ENCODE measurements at regions of chr19 and their contacts with region 1.

Region 1: DNA sequence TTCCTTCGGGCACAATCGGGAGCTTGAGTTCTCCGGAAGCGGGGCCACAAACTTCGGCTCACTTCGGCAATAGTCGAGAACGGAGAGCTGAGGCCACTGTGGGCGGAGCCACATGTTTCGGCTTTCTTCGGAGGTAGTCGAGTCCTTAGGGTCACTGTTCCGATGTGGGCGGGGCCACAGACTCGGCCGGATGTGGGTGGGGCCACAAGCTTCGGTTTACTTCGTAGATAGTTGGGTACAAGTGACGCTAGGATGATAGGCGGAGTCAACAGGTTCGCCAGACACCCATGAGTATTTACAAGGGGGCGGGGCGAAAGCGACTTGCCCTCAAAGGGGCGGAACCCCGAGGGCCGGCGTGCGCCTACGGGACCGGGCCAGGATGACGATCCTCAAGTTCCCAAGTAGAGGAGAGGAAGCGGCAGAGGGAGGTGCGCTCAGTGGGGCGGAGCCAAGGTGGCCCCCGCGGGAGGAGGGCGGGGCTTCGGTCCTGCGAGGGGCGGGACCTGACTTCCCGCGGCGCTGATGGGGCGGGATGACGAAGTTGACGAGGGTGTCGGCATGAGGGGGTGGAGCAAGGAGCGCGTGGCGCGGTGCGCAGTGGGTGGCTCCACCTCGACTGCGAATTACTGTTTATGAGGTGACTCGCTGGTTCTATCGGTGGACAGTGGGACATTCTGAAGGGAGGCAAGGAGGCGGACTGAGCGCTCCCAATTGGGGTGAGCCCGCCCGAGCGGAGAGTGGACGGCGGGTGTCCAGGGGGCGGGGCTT is 539 bp upstream of the MBOAT7 start:
- DNase-seq: peak; percentile 99 to 100 (median 100)

Region 2: GRCh38 chr19:54147676-54148075 is 42.2 kb before region 1 on chr19:
- intact Hi-C with region 1: no loop called
- DNase-seq: no peak

Region 3: DNA sequence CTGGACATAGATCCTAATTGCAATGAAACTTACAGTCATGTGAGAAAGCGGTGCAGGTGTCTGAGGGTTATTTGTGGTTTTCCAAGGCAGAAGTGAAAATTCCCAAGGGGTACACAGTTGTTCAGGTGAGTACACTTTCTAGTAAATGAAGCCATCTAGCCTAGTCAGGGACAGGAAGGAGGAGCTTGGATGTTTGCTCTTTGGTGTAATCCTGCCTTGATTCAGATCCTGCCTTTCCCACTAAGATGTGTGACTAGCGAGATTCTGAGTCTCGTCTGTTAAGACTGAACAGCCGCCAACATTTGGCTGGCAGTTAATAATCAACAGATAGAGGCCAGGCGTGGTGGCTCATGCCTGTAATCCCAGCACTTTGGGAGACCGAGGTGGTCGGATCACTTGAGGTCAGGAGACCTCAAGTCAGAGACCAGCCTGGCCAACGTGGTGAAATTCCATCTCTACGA is 13.3 kb after region 1 on chr19:
- intact Hi-C with region 1: loop called (anchors 1 kb)
- DNase-seq: no peak